CD4-positive, alpha-beta memory T cell (primary cell): ENCODE measurements at regions of chrX and their contacts with region 1.

Region 1: DNA sequence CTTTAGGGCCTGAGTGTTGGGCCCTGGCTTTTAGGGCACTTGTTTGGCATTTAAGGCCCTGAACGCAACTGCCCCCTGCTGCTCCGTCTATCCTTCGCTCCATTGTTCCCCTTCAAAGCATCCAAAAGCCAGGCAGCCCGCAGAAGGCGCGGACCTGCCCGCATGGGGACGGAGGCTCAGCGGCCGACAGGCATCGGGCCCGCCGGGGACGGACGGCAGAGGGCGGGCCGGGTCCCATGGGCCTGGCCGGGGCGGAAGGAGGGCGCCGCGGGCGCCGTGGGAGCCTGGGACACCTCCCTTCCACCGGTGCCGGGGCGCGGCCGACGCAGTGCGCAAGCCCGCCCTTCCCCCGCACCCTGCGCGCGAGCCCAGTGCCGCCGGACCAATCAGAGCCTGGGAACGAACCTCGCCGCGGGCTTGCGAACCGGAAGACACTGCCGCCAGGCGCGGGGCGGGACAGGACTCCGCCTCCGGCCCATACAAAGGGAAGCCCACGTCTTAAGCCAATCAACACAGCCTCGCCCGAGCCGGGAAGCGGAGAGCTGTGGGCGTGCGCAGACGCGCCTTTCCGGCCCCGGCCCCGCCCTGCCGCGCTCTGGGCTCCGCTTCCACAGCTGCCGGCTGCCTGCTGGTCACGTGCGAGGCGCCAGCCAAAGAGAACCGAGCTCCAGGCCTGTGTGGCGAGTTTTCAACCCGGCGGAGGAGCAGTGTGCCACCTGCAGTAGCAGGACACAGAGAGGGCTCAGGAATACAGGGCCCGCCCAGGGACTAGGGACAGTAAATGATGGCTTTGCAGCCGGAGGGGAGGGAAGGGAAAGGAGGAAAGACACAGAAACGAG is 2.1 kb upstream of the ARHGAP4 start:
- DNase-seq: peak; percentile 95 to 99 (median 97)
- H3K4me3 ChIP-seq: peak overlapping the region; percentile 17 to 72
- H3K4me3 Mint-ChIP-seq: peak overlapping the region; percentile 89 to 95 (median 92)
- H3K27ac ChIP-seq: peak overlapping the region; percentile 98
- H3K27ac Mint-ChIP-seq: peak overlapping the region; percentile 98 to 99 (median 99)
- H3K4me1 ChIP-seq: peaks cover 19% of the 10 kb centered on the region
- H3K4me1 Mint-ChIP-seq: peaks cover 6 to 66% (median 48%) of the 10 kb centered on the region in 4 donors
- H3K27me3 ChIP-seq: no peaks in the 10 kb centered on the region
- H3K27me3 Mint-ChIP-seq: no peaks in the 10 kb centered on the region

Region 2: GRCh38 chrX:153724252-153725040 is 203.7 kb before region 1 on chrX and contains the starts of genes ABCD1 and BCAP31:
- CTCF ChIA-PET with region 1: no interaction called
- POLR2A ChIA-PET with region 1: interaction called, 5 read pairs
- intact Hi-C with region 1: loop called (anchors 1 kb)
- DNase-seq: peak; percentile 86 to 92 (median 91)
- H3K4me3 ChIP-seq: peak within 1 kb of the TSS; percentile 17 to 63
- H3K4me3 Mint-ChIP-seq: peak within 1 kb of the TSS; percentile 84 to 89 (median 87)
- H3K27ac ChIP-seq: peak within 1 kb of the TSS; percentile 71
- H3K27ac Mint-ChIP-seq: peak within 1 kb of the TSS; percentile 81 to 88 (median 85)
- H3K4me1 ChIP-seq: peaks cover 42% of the 10 kb centered on the region
- H3K4me1 Mint-ChIP-seq: peaks cover 12 to 38% (median 22%) of the 10 kb centered on the region in 4 donors
- H3K27me3 ChIP-seq: no peaks in the 10 kb centered on the region
- H3K27me3 Mint-ChIP-seq: no peaks in the 10 kb centered on the region
- total RNA-seq, gene ABCD1: 6.7 to 6.8 TPM
- total RNA-seq, gene BCAP31: 126 to 128 TPM

Region 3: DNA sequence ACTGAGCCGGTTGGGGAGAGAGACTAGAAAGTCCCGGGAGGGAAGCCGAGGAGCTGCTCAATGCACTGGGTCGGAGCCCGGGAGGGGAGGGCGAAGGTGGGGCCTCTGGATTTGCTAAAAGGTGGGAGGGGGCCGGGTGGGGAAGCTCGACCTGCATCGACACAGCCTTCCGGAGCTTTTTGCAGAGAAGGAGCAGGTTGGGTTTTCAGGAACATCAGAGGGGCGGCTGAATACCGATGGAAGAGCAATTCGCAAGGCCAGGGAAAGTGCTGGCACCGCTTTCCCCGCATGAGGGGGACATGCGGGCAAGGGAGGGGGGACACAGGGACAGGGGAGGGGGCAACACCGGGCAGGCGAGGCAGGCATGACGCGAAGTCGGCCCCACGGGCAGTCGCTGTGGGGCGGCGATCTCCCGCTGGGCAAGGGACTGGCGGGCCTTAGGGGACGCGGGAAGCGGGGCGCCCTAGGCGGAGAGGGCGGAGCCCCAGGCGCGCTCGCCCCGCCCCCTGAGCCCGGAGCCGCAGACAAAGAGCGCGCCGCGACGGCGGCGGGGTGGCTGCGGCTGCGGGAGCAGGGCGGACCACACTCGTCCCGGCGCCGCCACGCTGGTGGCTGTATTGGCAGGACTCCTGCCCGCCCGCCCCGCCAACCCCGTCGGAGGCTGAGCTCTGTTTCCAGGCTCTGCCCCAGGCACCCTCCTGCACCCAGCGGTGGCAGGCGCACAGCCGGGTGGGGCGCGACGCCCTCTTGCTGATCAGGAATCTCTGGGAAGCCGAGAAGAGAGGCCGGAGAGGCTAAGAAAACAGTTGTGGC is 109.4 kb before region 1 on chrX:
- CTCF ChIA-PET with region 1: interaction called, 3 read pairs
- POLR2A ChIA-PET with region 1: interaction called, 10 read pairs
- intact Hi-C with region 1: no loop called
- DNase-seq: peak; percentile 45 to 53 (median 49)
- H3K4me3 ChIP-seq: no peak overlapping the region
- H3K4me3 Mint-ChIP-seq: peak overlapping the region; percentile 43 to 74 (median 56)
- H3K27ac ChIP-seq: no peak overlapping the region
- H3K27ac Mint-ChIP-seq: no peak overlapping the region
- H3K4me1 ChIP-seq: peaks cover 59% of the 10 kb centered on the region
- H3K4me1 Mint-ChIP-seq: peaks cover 33 to 62% (median 47%) of the 10 kb centered on the region in 4 donors
- H3K27me3 ChIP-seq: no peaks in the 10 kb centered on the region
- H3K27me3 Mint-ChIP-seq: no peaks in the 10 kb centered on the region

Region 4: GRCh38 chrX:153947009-153947769 is 19.0 kb after region 1 on chrX:
- CTCF ChIA-PET with region 1: interaction called, 290 read pairs
- POLR2A ChIA-PET with region 1: interaction called, 447 read pairs
- intact Hi-C with region 1: loop called (anchors 1 kb)
- DNase-seq: peak; percentile 77 to 82 (median 80)
- H3K4me3 ChIP-seq: no peak overlapping the region
- H3K4me3 Mint-ChIP-seq: no peak overlapping the region
- H3K27ac ChIP-seq: peak overlapping the region; percentile 9
- H3K27ac Mint-ChIP-seq: peak overlapping the region in 6 of 7 donors; percentile 40 to 91 (median 68)
- H3K4me1 ChIP-seq: peaks cover 20% of the 10 kb centered on the region
- H3K4me1 Mint-ChIP-seq: peaks cover 5 to 16% (median 6%) of the 10 kb centered on the region in 4 donors
- H3K27me3 ChIP-seq: no peaks in the 10 kb centered on the region
- H3K27me3 Mint-ChIP-seq: no peaks in the 10 kb centered on the region

Region 5: GRCh38 chrX:154019633-154020528 is 91.7 kb after region 1 on chrX and contains the start of gene IRAK1:
- CTCF ChIA-PET with region 1: no interaction called
- POLR2A ChIA-PET with region 1: interaction called, 12 read pairs
- intact Hi-C with region 1: no loop called
- DNase-seq: peak; percentile 36 to 62 (median 54)
- H3K4me3 ChIP-seq: peak within 1 kb of the TSS; percentile 28 to 60
- H3K4me3 Mint-ChIP-seq: peak within 1 kb of the TSS; percentile 86 to 93 (median 89)
- H3K27ac ChIP-seq: peak within 1 kb of the TSS; percentile 78
- H3K27ac Mint-ChIP-seq: peak within 1 kb of the TSS; percentile 91 to 95 (median 94)
- H3K4me1 ChIP-seq: peaks cover 18% of the 10 kb centered on the region
- H3K4me1 Mint-ChIP-seq: peaks cover 3 to 29% (median 15%) of the 10 kb centered on the region in 4 donors
- H3K27me3 ChIP-seq: no peaks in the 10 kb centered on the region
- H3K27me3 Mint-ChIP-seq: no peaks in the 10 kb centered on the region
- total RNA-seq, gene IRAK1: 66.9 to 74.5 TPM